ENCODE measurements at regions of chr10 and their contacts with region 1.

Region 1: GRCh38 chr10:21278491-21279239 is 246.8 kb downstream of the SKIDA1 start:
- DNase-seq: peak; percentile 84
- H3K4me3 ChIP-seq: no peak overlapping the region
- H3K27ac ChIP-seq: no peak overlapping the region
- H3K27me3 ChIP-seq: no peaks in the 10 kb centered on the region
- CTCF ChIP-seq: peak; percentile 84

Region 2: DNA sequence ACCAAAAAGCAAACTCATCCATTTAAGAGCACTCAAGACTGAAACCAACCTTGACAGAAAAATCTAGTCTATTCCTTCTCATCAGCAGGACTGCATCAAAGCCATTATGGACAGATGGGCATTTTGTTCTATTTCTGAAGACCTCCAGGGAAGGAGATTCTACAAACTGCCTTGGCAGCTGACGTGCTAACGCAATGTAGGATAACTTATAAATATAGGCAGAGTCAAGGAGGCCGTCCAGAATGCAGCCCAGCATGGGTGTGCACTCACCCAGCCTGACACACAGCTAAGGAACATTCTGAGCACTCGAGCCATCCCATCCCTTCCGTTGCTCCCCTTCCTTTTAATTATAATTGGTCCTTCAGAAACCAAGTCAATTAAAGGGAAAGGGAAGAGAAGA is 356.2 kb before region 1 on chr10:
- CTCF ChIA-PET with region 1: no interaction called
- POLR2A ChIA-PET with region 1: no interaction called
- DNase-seq: no peak
- H3K4me3 ChIP-seq: no peak overlapping the region
- H3K27ac ChIP-seq: no peak overlapping the region
- H3K27me3 ChIP-seq: no peaks in the 10 kb centered on the region
- CTCF ChIP-seq: no peak

Region 3: DNA sequence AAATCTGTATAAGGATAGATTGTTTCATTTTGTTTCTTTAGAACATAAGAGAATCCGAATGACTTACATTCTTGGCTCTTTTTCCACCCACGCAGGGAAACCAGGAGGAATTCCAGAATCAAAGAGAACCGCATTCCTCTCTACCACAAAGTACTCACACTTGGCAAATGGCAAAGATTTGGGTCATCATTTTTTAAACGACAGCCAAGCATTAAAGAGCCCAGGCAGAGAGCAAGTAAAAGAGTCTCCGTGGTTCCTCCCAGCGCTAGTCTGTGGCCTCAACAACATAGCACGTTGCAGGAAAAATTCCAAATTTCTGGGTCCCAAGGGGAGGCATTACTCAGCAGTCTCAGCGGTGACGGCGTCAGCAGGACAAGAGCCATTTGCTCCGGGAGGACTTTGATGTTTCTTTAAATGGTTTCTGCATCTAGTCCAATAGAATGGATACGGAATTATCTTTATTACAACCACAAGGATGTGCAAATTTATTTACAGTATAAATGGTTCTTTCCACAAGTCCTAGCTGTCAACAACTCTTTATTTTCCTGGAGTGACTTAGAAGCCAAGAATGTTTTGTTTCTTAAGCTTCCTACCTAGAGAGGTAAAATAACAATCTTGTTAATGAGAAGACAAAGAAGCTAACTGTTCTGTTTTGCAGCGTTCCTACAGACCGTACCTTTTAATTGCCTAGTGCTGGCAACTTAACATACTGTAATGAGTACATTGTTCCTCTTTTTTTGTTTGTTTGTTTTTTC is 14.3 kb after region 1 on chr10:
- CTCF ChIA-PET with region 1: interaction called, 14 read pairs
- POLR2A ChIA-PET with region 1: no interaction called
- DNase-seq: peak; percentile 92
- H3K4me3 ChIP-seq: peak overlapping the region; percentile 51
- H3K27ac ChIP-seq: peak overlapping the region; percentile 68
- H3K27me3 ChIP-seq: no peaks in the 10 kb centered on the region
- CTCF ChIP-seq: no peak

Region 4: DNA sequence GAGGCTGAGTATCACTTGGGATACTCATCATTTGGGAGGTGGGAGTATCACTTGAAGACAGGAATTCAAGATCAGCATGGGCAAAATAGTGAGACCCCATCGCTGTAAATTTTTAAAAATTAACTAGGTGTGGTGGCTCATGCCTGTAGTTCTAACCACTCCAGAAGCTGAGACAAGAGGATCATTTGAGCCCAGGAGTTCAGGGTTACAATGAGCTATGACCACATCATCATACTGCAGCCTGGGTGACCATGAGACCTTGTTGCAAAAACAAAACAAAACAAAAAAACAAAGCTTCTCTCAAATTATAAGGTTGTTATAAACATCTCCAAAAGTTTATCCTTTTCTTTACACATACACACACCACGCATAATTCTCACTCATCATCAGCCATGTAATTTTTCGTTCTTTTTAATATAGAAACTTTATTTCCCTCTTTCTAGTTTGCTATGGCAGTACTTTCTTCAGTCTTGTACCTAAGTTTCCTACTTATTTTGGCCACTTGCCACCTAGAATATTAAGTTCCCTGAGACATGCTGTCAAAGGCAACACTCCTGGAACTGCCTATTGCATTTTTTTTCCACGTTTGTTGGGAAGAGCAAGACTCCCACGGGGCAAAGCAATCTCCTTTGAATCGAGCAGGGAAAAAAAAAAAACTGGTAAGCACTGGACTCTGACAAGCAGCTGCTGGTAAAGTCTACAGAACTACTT is 209.7 kb after region 1 on chr10:
- CTCF ChIA-PET with region 1: interaction called, 32 read pairs
- POLR2A ChIA-PET with region 1: interaction called, 6 read pairs
- DNase-seq: no peak
- H3K4me3 ChIP-seq: no peak overlapping the region
- H3K27ac ChIP-seq: no peak overlapping the region
- H3K27me3 ChIP-seq: no peaks in the 10 kb centered on the region
- CTCF ChIP-seq: no peak

Region 5: GRCh38 chr10:21495752-21496342 is 217.2 kb after region 1 on chr10:
- CTCF ChIA-PET with region 1: interaction called, 32 read pairs
- POLR2A ChIA-PET with region 1: interaction called, 6 read pairs
- DNase-seq: no peak
- H3K4me3 ChIP-seq: peak overlapping the region; percentile 85
- H3K27ac ChIP-seq: peak overlapping the region; percentile 31
- H3K27me3 ChIP-seq: no peaks in the 10 kb centered on the region
- CTCF ChIP-seq: peak; percentile 78

Region 6: GRCh38 chr10:21516242-21517131 is 237.8 kb after region 1 on chr10:
- CTCF ChIA-PET with region 1: interaction called, 15 read pairs
- POLR2A ChIA-PET with region 1: no interaction called
- DNase-seq: no peak
- H3K4me3 ChIP-seq: peak overlapping the region; percentile 70
- H3K27ac ChIP-seq: peak overlapping the region; percentile 58
- H3K27me3 ChIP-seq: no peaks in the 10 kb centered on the region
- CTCF ChIP-seq: no peak

Region 7: DNA sequence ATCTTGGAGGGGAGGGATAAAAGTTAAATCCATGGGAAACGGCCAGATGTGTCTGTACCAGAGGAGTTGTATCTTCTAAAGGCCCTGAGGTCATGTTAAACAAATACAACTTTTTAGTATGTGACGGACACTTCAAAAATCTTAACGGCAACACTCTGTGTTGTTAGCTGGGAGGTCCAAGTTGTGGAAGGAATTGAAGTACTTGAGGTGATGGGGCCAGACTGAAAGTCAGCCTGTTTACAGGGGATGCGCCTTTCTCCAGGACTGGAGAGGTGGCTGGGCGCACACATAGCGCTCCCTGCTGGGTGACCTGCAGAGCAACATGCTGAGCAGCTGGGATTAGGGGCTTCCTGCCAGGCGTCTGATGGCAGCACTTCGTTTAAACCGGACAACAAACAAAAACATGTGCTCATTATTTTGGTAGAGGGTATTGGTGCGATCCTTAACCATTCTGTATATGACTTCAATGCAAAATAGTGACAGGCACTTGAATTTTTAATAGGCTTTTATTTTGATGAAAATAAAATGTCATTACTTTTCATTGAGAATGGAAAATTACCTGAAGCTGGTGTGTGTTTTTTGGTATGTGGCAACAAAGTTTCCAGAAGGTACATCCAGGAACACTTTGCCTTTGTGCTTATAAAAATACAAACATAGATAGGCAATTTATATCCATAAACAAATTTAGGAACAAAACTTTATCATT is 453.6 kb after region 1 on chr10:
- CTCF ChIA-PET with region 1: interaction called, 17 read pairs
- POLR2A ChIA-PET with region 1: no interaction called
- DNase-seq: peak; percentile 61
- H3K4me3 ChIP-seq: no peak overlapping the region
- H3K27ac ChIP-seq: no peak overlapping the region
- H3K27me3 ChIP-seq: no peaks in the 10 kb centered on the region
- CTCF ChIP-seq: peak; percentile 98

Measured in AG04450 (cell line).